PC-3 (cell line): ENCODE measurements at regions of chr14 and their contacts with region 1.

Region 1: DNA sequence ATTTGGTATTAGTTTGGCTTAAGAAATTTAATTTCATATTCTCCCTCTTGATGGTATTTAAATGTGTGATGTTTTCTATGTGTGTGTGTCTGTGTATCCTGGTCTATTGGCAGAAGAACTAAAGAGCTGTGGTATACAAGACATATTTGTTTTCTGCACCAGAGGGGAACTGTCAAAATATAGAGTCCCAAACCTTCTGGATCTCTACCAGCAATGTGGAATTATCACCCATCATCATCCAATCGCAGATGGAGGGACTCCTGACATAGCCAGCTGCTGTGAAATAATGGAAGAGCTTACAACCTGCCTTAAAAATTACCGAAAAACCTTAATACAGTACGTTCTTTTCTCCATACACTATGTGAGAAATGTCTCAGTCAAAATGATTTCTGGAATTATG is 14.6 kb downstream of the CDKN3 start:
- DNase-seq: no peak
- ATAC-seq: no peak
- H3K4me3 ChIP-seq: no peak overlapping the region
- H3K27ac ChIP-seq: no peak overlapping the region
- H3K4me1 ChIP-seq: no peaks in the 10 kb centered on the region
- H3K27me3 ChIP-seq: no peaks in the 10 kb centered on the region
- CTCF ChIP-seq: no peak

Region 2: DNA sequence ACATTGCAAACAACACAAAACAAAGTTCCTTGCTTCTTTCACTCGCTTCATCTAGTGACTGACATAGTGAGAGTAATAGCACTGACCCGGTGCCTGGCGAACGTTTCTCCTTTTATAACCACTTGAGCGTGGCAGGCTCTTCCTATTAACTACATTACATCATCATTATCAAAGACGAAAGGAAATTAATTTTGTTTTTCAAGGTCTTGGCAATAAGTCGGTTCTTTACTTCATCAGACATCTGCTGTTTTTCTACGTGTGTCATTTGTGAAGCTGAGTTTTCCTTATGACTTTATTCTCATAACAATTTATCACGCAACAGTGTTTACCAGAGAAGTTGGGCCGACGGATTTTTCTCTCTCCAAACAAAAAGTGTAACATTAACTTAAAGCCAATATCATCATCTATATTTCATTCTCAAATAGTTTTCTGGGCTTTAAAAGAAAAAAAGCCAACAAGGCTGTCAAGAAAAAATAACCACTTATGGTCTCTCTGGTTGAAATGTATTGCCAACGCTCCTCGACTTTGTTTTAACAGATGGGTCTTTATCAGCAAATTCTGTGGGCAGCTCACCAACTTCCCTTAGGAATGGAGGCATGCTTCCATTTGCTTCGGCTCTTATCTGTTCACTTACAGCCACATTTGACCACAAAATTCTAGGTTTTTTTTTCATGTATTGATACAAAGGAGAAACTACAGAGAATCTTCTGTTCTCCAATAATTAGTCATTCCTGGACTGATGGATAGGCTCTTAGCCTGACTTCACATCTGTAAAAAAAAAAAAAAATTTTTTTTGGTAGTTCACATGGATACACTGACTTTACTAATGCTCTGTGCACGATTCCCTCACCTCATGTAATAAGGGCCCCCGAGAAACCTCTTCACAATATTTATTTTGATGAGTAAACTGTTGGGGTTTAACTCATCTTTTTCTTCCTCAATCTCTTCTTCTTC is 111.7 kb before region 1 on chr14:
- CTCF ChIA-PET with region 1: no interaction called
- POLR2A ChIA-PET with region 1: no interaction called
- intact Hi-C with region 1: no loop called
- DNase-seq: no peak
- ATAC-seq: no peak
- H3K4me3 ChIP-seq: no peak overlapping the region
- H3K27ac ChIP-seq: no peak overlapping the region
- H3K4me1 ChIP-seq: 0 out of 2 replicates have a peak, but pooled peaks cover 9% of the 10 kb centered on the region
- H3K27me3 ChIP-seq: no peaks in the 10 kb centered on the region
- CTCF ChIP-seq: no peak

Region 3: DNA sequence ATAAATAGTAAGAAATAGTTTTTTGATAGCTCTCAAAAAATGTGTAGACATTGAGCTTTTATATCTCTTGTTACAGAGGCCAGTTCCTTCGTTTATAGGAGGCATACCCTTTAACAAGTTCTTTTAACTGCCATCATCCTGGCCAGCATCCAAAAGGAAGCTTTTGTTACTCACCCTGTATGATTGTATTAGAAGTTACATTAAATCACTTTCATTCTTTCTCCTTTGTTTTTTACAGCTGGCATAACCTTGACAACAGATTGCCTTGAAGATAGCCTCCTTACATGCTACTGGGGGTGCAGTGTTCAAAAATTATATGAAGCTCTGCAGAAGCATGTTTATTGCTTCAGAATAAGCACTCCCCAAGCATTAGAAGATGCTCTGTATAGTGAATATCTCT is 118.4 kb after region 1 on chr14:
- CTCF ChIA-PET with region 1: no interaction called
- POLR2A ChIA-PET with region 1: interaction called, 19 read pairs
- intact Hi-C with region 1: no loop called
- DNase-seq: peak; percentile 87
- ATAC-seq: peak; percentile 97
- H3K4me3 ChIP-seq: no peak overlapping the region
- H3K27ac ChIP-seq: no peak overlapping the region
- H3K4me1 ChIP-seq: peaks cover 8% of the 10 kb centered on the region
- H3K27me3 ChIP-seq: no peaks in the 10 kb centered on the region
- CTCF ChIP-seq: no peak